HCT116 (cell line): ENCODE measurements at regions of chr6 and their contacts with region 1.

Region 1: DNA sequence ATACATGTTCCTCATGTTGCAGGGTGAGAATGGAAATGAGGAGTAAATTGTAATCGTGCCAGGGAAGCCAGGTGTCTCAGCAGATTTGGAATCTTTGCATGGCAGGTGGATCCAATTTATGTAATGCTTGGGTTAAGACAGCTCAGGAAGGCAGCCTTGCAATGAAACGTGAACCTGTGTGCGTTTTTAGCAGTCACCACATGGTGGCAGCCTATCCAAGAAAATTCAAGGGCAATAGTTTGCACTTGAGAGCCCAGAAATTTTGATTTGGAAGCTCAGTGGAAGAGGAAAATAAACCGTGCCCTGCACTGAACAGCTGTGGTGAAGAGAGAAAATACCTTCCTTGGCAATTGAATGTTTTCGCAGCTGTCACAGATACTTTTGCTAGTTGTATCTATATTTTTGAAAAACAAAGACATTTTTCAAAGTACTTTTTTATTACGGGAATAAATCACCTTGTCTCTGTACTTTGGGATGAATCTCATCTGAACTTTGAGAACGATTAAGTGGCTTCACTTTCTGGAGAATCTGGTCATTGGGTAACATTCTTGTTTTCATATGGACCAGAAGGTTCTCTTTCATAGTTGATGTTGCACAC is 26.5 kb downstream of the MTHFD1L start:
- DNase-seq: peak; percentile 64
- ATAC-seq: peak; percentile 77
- H3K4me3 ChIP-seq: no peak overlapping the region
- H3K27ac ChIP-seq: no peak overlapping the region
- H3K4me1 ChIP-seq: peaks cover 14 to 39% of the 10 kb centered on the region in 2 experiments; a peak in 3 of 4 replicates
- H3K27me3 ChIP-seq: no peaks in the 10 kb centered on the region
- CTCF ChIP-seq: peak; percentile 74 to 86 (median 79)
- POLR2A ChIP-seq: no peak
- RAD21 ChIP-seq: peak; percentile 91

Region 2: GRCh38 chr6:150902142-150902776 is 10.3 kb after region 1 on chr6:
- CTCF ChIA-PET with region 1: interaction called, 13 read pairs
- POLR2A ChIA-PET with region 1: no interaction called
- RAD21 ChIA-PET with region 1: no interaction called
- intact Hi-C with region 1: no loop called
- DNase-seq: no peak
- ATAC-seq: no peak
- H3K4me3 ChIP-seq: no peak overlapping the region
- H3K27ac ChIP-seq: no peak overlapping the region
- H3K4me1 ChIP-seq: peaks cover 0 to 20% of the 10 kb centered on the region in 2 experiments; a peak in 2 of 4 replicates
- H3K27me3 ChIP-seq: no peaks in the 10 kb centered on the region
- CTCF ChIP-seq: no peak
- POLR2A ChIP-seq: no peak
- RAD21 ChIP-seq: no peak

Region 3: GRCh38 chr6:151330134-151330696 is 438.2 kb after region 1 on chr6:
- CTCF ChIA-PET with region 1: interaction called, 33 read pairs
- POLR2A ChIA-PET with region 1: interaction called, 9 read pairs
- RAD21 ChIA-PET with region 1: interaction called, 7 to 9 read pairs
- intact Hi-C with region 1: loop called (anchors 1 kb)
- DNase-seq: no peak
- ATAC-seq: no peak
- H3K4me3 ChIP-seq: no peak overlapping the region
- H3K27ac ChIP-seq: peak overlapping the region; percentile 69
- H3K4me1 ChIP-seq: peaks cover 6 to 74% of the 10 kb centered on the region in 2 experiments; a peak in 3 of 4 replicates
- H3K27me3 ChIP-seq: no peaks in the 10 kb centered on the region
- CTCF ChIP-seq: no peak
- POLR2A ChIP-seq: no peak
- RAD21 ChIP-seq: no peak

Region 4: DNA sequence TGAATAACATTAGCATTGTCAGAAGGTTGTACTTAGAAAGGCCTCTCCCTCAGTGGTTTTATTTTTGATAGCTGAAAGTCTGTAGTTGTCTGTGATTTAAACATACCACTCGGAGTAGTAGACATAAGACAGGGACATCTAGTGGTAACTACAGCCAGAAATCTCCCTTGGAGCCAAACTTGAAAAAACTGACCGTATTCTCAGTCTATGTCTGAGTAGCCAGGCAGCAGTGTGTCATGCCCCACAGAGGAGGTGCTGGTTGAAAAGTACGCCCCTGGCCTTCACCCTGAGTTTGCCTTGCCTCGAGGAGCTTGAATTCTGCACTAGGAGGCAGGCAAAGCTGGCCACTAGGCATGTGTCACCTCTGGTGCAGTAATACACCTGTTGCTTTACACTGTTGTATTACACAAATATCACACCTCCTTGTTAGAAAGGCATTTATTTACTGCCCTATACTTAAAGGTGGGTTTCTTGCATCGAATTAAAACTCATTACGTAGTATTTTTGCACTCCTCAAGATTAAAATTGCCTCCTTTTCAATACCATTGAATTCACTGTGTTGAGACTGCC is 478.6 kb after region 1 on chr6:
- CTCF ChIA-PET with region 1: interaction called, 10 read pairs
- POLR2A ChIA-PET with region 1: no interaction called
- RAD21 ChIA-PET with region 1: no interaction called
- intact Hi-C with region 1: no loop called
- DNase-seq: no peak
- ATAC-seq: peak; percentile 58
- H3K4me3 ChIP-seq: no peak overlapping the region
- H3K27ac ChIP-seq: no peak overlapping the region
- H3K4me1 ChIP-seq: peaks cover 18% of the 10 kb centered on the region in 2 experiments
- H3K27me3 ChIP-seq: no peaks in the 10 kb centered on the region
- CTCF ChIP-seq: peak; percentile 24 to 50 (median 40); a peak in 5 of 6 replicates
- POLR2A ChIP-seq: no peak
- RAD21 ChIP-seq: peak; percentile 56

Region 5: DNA sequence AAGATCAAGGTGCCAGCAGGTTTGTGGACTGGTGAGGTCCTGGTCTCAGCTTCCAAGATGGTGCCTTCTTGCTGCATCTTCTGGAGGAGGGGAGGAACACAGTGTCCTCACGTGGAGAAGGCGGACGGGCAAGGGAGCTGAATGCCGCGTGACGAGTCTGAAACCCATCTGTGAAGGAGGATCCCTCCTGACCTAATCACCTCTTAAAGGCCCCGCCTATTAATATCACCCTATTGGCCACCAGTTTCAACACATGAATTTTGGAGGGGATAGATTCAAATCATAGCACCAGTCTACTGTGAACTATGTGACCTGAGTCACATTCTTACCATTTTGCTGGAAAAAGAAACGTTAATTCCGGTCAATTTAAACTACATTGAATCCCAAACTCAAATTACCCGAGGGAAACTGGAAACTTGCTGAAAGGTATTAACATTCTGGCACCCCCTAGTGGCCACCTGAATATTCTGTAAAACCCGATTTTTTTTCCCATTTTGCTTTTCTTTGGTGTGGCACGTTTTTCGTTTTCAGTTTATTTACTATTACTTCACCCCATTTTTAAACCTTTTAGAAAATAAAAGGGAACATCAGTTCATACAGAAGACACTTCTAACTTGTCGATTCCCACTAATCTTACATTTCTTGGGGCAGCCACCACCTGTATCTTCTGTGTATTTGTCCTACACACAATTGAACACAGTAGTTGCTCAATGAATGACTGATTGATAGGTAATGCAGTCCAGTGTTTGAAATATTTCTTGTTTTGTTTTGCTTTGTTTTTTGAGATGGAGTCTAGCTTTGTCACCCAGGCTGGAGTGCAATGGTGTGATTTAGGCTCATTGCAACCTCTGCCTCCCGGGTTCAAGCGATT is 583.9 kb after region 1 on chr6:
- CTCF ChIA-PET with region 1: no interaction called
- POLR2A ChIA-PET with region 1: no interaction called
- RAD21 ChIA-PET with region 1: no interaction called
- intact Hi-C with region 1: loop called (anchors 2 kb)
- DNase-seq: peak; percentile 23
- ATAC-seq: peak; percentile 68
- H3K4me3 ChIP-seq: no peak overlapping the region
- H3K27ac ChIP-seq: no peak overlapping the region
- H3K4me1 ChIP-seq: peaks cover 0 to 6% of the 10 kb centered on the region in 2 experiments; a peak in 2 of 4 replicates
- H3K27me3 ChIP-seq: no peaks in the 10 kb centered on the region
- CTCF ChIP-seq: peak; percentile 66 to 82 (median 72)
- POLR2A ChIP-seq: no peak
- RAD21 ChIP-seq: peak; percentile 82